ENCODE measurements at regions of chr17 and their contacts with region 1.

Region 1: DNA sequence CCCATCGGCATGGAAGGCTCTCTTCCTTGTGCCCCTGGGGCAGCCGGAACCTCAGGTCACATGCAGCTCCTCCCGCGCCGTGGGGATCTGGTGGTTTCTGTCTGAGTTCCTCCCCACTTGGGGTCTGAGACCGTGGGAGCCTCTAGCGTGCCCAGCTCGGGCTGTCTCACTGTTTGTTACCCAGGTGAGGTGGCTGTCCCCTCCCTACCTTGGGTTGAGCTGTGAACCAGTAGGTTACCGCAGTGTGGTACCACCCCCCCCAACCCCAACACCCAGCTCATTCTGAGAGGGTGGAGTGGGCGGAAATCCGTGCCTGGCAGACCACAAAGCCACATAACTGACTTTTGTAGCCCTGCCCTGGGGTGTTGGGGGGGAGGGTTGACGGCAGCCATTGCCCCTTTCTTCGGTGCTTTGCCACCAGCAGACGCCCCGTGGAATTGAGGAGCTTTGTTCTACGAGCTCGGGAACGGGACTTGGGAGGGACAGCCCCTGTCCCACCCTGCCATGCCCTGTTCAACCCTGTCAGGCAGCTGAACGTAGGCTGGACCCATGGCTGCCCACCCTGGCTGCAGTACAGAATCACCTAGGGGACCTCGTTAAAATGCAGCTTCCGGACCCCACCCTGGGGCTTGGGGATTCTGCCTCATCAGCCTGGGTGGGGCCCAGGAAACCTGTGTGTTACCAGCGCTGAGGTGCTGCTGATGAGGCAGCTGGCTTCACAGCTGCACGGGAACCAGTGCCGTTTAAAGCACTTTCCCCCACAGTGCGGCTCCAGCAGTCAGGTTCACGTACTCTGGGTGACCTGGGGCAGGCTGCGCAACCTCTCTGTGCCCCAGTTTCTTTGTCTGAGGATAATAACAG is 18.5 kb downstream of the RAP1GAP2 start:
- DNase-seq: peak; percentile 89
- H3K4me3 ChIP-seq: peak overlapping the region; percentile 65
- H3K27ac ChIP-seq: peak overlapping the region; percentile 40
- H3K4me1 ChIP-seq: peaks cover 21% of the 10 kb centered on the region
- CTCF ChIP-seq: no peak

Region 2: DNA sequence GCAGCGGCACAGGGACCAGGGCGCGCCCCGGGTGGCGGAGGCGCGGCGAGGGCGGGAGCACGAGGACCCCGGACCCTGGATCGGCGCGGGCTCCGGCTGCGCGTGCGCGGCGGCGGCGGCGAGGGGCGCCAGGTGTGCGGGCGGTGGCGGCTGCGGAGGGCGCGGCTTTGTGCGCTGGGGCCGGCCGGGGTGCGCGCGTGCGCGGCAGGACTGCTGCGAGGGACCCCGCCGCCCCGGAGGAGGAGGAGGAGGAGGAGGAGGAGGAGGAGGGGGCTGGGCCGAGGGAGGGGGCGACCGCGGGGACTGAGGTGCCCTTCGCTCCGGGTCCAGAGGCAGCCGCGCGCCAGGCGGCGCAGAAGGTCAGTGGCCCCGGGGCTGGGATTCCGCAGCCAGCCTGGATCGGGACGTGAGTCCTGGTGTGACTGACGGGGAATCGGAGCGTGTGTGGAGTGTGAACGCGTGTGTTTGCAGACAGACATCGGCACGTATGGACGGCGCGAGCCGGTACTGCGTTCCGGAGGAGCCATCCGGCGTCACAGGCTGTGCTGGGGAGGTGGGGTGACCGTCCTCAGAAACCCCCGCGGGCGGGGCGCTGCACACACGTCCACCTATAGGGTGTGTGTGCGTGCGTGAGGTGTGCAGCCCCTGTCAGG is 38.0 kb before region 1 on chr17:
- CTCF ChIA-PET with region 1: no interaction called
- POLR2A ChIA-PET with region 1: no interaction called
- intact Hi-C with region 1: no loop called
- DNase-seq: no peak
- H3K4me3 ChIP-seq: no peak overlapping the region
- H3K27ac ChIP-seq: no peak overlapping the region
- H3K4me1 ChIP-seq: no peaks in the 10 kb centered on the region
- CTCF ChIP-seq: no peak

Region 3: GRCh38 chr17:2954898-2955445 is 140.3 kb after region 1 on chr17:
- CTCF ChIA-PET with region 1: interaction called, 14 read pairs
- POLR2A ChIA-PET with region 1: no interaction called
- intact Hi-C with region 1: no loop called
- DNase-seq: peak; percentile 65
- H3K4me3 ChIP-seq: peak overlapping the region; percentile 59
- H3K27ac ChIP-seq: peak overlapping the region; percentile 67
- H3K4me1 ChIP-seq: peaks cover 49% of the 10 kb centered on the region
- CTCF ChIP-seq: no peak